ENCODE measurements at regions of chr9 and their contacts with region 1.

Region 1: DNA sequence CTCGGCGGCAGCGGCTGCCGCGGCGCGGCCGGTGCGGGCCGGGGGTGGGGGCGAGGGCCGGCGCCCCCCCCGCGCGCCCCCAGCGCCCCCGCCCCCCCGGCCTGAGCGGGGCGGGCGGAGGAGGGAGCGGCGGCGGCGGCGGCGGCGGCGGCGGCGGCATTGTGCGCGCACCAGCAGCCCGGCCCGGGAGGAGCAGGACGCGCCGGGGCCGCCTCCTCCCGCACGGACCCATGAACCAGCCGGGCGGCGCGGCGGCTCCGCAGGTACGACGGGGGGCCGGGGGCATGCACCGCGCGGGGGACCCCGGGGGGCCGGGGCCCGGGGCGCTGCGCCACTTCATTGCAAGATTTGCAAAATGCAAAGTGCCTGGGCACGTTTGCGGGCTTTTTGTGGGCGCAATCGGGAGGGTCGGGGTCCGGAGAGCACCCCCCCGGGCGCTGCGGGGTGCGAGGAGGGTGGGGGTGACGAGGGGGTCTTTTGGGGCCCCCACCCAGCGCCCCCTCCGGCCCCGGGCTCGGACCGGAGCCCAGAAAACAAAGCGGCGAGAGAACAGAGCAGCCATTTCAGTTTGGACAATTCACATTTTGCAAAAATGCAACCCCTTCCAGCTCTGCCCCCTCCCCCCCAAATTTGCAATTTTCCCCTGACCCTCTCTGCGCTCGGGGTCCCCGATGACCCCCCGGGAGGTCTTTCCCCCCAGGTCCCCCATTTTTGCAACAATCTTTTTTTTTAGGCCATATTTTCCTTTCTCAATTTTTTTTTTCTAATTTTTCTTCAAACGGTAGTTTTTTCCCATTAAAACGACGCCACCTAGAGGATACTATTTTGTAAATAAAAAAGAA is at the start of gene ZNF618:
- DNase-seq: peak; percentile 74
- H3K4me3 Mint-ChIP-seq: peak within 1 kb of the TSS; percentile 86
- H3K27ac Mint-ChIP-seq: peak within 1 kb of the TSS; percentile 13
- H3K4me1 Mint-ChIP-seq: peaks cover 9% of the 10 kb centered on the region
- H3K27me3 Mint-ChIP-seq: peaks cover 42% of the 10 kb centered on the region
- total RNA-seq, gene ZNF618: 0.14 and 0.19 TPM in 2 replicates

Region 2: DNA sequence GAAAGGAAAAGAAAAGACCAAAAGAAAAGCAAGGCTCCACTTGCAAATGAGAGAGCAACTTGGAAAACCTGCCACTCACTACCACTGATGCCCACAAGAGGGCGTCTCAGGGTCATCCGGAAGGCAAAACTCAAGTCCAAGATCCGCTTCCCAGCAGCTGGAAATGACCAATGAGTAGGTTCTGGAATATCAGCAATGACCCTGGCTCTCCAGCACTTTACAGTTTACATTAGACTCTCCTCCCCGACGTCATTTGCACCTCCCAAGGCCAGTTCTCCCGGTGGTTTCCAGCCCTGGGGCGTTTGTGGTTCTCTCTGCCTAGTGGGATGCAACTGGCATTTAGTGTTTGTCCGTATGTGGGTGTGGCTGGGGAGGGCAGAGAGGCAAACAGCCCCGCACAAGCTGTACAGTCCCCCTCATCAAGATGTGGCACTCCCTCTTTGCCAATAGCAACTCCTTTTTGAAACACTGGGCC is 194.0 kb before region 1 on chr9:
- intact Hi-C with region 1: loop called (anchors 5 kb)
- DNase-seq: peak; percentile 80
- H3K4me3 Mint-ChIP-seq: no peak overlapping the region
- H3K27ac Mint-ChIP-seq: no peak overlapping the region
- H3K4me1 Mint-ChIP-seq: peaks cover 3% of the 10 kb centered on the region
- H3K27me3 Mint-ChIP-seq: peaks cover 50% of the 10 kb centered on the region

Region 3: GRCh38 chr9:113807173-113808061 is 69.0 kb before region 1 on chr9:
- intact Hi-C with region 1: loop called (anchors 2 kb)
- DNase-seq: peak; percentile 79
- H3K4me3 Mint-ChIP-seq: no peak overlapping the region
- H3K27ac Mint-ChIP-seq: no peak overlapping the region
- H3K4me1 Mint-ChIP-seq: no peaks in the 10 kb centered on the region
- H3K27me3 Mint-ChIP-seq: peaks cover 10% of the 10 kb centered on the region

Measured in activated CD4-positive, alpha-beta T cell treated with anti-CD3 and anti-CD28 coated beads, Interleukin-2, amount 10 ng/mL, durations not matched to agents 24 days and 14 days (primary cell).